Activated CD4-positive, alpha-beta memory T cell treated with anti-CD3 and anti-CD28 coated beads for 36 hours (primary cell): ENCODE measurements at regions of chr10 and their contacts with region 1.

Region 1: DNA sequence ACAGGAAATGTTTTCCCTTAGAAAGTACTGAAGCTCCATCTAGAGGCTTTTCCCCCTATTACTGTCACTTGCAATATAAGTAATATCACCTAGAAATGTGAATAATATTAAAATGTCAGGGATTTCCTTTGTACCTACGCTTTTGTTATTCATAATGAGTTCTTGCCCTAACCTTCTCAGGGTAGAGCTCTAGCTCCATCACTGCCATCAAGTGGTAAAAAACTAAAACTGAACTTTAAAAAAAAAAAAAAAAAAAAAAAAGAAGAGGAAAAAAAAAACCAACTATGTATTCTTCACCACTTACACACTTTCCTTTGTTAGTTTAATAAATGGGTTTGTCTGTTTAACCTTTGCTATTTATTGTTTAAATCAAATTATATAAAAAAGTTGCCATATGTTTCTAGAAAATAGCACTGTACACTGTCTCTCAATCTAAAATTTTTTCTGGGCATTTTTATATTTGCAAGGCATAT is 49.9 kb downstream of the DNAJC1 start:
- DNase-seq: no peak
- H3K4me3 Mint-ChIP-seq: no peak overlapping the region
- H3K27ac Mint-ChIP-seq: no peak overlapping the region
- H3K4me1 Mint-ChIP-seq: peaks cover 2% of the 10 kb centered on the region
- H3K27me3 Mint-ChIP-seq: no peaks in the 10 kb centered on the region

Region 2: DNA sequence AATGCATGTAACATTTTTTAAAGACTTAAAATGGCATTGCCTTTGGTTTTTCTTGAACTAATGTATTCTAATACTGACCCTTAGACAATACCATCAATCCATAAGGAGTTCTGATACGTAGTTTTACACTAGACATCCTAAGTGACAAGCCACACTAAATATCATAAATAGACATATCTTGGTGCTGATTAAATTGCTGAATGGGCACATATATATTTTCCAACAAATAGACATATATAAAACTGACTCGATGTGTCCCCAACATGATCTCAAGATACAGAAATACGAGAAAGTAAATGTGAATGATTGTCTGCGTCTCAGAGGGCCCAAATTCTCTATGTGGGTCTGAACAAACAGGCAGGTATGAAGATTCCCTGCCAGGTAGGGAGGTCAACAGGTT is 1156.3 kb before region 1 on chr10:
- CTCF ChIA-PET with region 1: no interaction called
- POLR2A ChIA-PET with region 1: no interaction called
- intact Hi-C with region 1: no loop called
- DNase-seq: no peak
- H3K4me3 Mint-ChIP-seq: no peak overlapping the region
- H3K27ac Mint-ChIP-seq: no peak overlapping the region
- H3K4me1 Mint-ChIP-seq: no peaks in the 10 kb centered on the region
- H3K27me3 Mint-ChIP-seq: no peaks in the 10 kb centered on the region

Region 3: DNA sequence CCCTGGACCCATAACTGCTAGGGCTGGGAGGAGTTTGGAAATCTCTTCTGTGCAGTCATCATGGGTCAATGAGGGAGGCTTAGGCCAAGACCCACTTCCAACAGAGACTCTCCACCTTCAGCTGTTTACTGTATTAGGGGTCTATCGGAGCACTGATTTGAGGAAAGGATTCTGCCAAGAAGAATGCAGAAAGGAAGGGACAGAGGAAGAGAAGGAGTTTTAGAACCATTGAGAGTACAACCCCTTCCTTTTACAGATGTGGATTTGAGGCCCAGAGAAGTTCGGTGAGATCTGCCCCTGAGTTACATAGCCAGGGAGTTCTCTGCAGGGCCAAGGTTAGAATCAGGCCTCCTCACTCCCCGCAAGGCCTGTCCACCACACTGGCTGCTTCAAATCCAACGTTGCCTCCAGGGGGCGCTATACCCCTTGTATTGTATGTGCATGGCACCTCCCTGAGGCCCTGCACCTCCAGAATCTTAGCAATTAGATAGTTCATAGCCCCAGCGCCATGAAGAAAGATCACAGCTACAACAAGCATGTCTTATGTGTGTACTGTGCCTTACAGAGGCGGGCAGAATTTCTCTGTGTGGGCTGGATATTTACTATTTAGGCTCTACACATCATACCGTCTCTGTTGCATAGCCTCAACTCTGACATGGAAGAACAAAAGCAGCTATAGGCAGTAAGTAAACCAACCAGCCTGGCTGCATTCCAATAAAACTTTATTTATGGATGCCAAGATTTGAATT is 675.0 kb before region 1 on chr10:
- CTCF ChIA-PET with region 1: no interaction called
- POLR2A ChIA-PET with region 1: no interaction called
- intact Hi-C with region 1: loop called (anchors 2 kb)
- DNase-seq: peak; percentile 85
- H3K4me3 Mint-ChIP-seq: no peak overlapping the region
- H3K27ac Mint-ChIP-seq: no peak overlapping the region
- H3K4me1 Mint-ChIP-seq: no peaks in the 10 kb centered on the region
- H3K27me3 Mint-ChIP-seq: peaks cover 6% of the 10 kb centered on the region